Sigmoid colon (tissue), 7 donors: ENCODE measurements at regions of chr18 and their contacts with region 1.

Region 1: DNA sequence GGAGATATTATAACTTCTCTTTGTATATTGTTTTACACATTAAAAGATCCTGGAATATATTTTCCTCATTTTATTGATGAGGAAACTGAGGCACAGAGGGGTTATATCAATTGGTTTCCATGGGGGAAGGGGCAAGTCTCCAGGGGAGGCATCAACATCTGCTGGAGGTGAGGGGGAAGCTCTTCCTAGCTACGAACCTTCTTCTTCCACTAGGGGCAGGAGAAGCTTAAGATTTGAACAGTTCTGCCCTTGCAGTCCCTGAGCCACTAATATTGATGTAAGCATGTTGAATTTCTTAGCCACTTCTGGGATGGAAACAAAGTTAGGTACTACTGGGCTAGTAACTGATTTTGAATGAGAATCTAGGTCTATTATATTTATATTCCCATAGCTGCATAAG is 140.1 kb upstream of the AQP4 start:
- DNase-seq: no peak
- H3K4me3 ChIP-seq: no peak overlapping the region
- H3K27ac ChIP-seq: no peak overlapping the region
- H3K4me1 ChIP-seq: no peaks in the 10 kb centered on the region
- H3K27me3 ChIP-seq: no peaks in the 10 kb centered on the region
- CTCF ChIP-seq: no peak
- EP300 ChIP-seq: no peak
- POLR2A ChIP-seq: no peak

Region 2: GRCh38 chr18:26813043-26813442 is 192.5 kb before region 1 on chr18:
- intact Hi-C with region 1: loop called (anchors 10 kb)
- DNase-seq: no peak
- H3K4me3 ChIP-seq: no peak overlapping the region
- H3K27ac ChIP-seq: no peak overlapping the region
- H3K4me1 ChIP-seq: no peaks in the 10 kb centered on the region
- H3K27me3 ChIP-seq: no peaks in the 10 kb centered on the region
- CTCF ChIP-seq: peak in 2 of 4 experiments; percentile 22 to 23
- EP300 ChIP-seq: no peak
- POLR2A ChIP-seq: no peak

Region 3: GRCh38 chr18:27185025-27185763 is 179.6 kb after region 1 on chr18 and contains the start of gene CHST9:
- intact Hi-C with region 1: no loop called
- DNase-seq: no peak
- H3K4me3 ChIP-seq: peak within 1 kb of the TSS; percentile 39 to 49 (median 46)
- H3K27ac ChIP-seq: no peak within 1 kb of the TSS
- H3K4me1 ChIP-seq: peaks cover 0 to 10% (median 8%) of the 10 kb centered on the region in 4 donors
- H3K27me3 ChIP-seq: peaks cover 0 to 38% (median 17%) of the 10 kb centered on the region in 3 donors
- CTCF ChIP-seq: no peak
- EP300 ChIP-seq: no peak
- POLR2A ChIP-seq: no peak
- total RNA-seq, gene CHST9: 0.83 to 3.1 (median 1.3) TPM